GM12878 (cell line): ENCODE measurements at regions of chr5 and their contacts with region 1.

Region 1: DNA sequence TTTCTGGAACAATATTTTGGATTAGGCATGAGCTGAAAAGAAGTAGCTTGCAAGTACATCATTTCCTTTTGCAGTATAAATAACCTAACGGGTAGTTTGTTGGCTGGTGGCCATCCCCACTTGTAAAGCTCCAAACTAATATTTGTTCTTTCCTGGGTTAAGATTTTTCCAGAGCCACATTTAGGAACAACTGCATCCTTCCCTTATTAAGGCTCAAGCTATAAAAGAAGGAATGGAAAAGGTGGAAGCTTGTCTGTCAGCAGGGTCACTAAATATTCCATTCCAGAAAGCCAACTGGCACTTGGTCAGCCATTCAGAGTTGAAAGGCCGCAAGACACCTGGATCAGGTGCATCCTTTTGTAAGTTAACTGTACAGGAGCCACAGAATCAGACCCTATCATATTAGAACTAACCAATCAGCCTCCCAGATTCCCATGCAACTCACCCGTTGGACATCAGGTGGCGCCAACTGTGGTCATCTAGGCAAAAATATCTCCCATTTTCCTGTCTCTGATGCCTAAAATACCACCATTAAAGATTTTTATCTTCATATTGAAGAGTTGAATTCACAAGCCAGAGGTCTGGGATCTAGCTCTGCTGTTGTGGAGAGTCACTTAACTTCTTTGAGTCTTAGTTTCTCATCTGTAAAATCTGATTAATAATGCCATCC is 82.9 kb downstream of the PTCD2 start:
- DNase-seq: no peak
- ATAC-seq: no peak
- H3K4me3 ChIP-seq: no peak overlapping the region
- H3K27ac ChIP-seq: no peak overlapping the region
- H3K4me1 ChIP-seq: no peaks in the 10 kb centered on the region
- H3K27me3 ChIP-seq: no peaks in the 10 kb centered on the region
- CTCF ChIP-seq: peak in 1 of 3 experiments; percentile 18; a peak in 2 of 6 replicates
- EP300 ChIP-seq: no peak
- POLR2A ChIP-seq: no peak
- RAD21 ChIP-seq: 0 out of 2 replicates have a peak, but pooled peaks have one; percentile 1

Region 2: GRCh38 chr5:72214168-72214567 is 188.9 kb before region 1 on chr5:
- CTCF ChIA-PET with region 1: no interaction called
- POLR2A ChIA-PET with region 1: no interaction called
- RAD21 ChIA-PET with region 1: no interaction called
- SMC1A ChIA-PET with region 1: no interaction called
- in situ Hi-C with region 1: no loop called
- intact Hi-C with region 1: no loop called
- DNase-seq: no peak
- ATAC-seq: no peak
- H3K4me3 ChIP-seq: no peak overlapping the region
- H3K27ac ChIP-seq: no peak overlapping the region
- H3K4me1 ChIP-seq: no peaks in the 10 kb centered on the region
- H3K27me3 ChIP-seq: no peaks in the 10 kb centered on the region
- CTCF ChIP-seq: no peak
- EP300 ChIP-seq: no peak
- POLR2A ChIP-seq: no peak
- RAD21 ChIP-seq: no peak

Region 3: GRCh38 chr5:72417333-72418207 is 14.5 kb after region 1 on chr5:
- CTCF ChIA-PET with region 1: interaction called, 5 read pairs
- POLR2A ChIA-PET with region 1: no interaction called
- RAD21 ChIA-PET with region 1: interaction called, 3 read pairs
- SMC1A ChIA-PET with region 1: interaction called, 12 read pairs
- in situ Hi-C with region 1: no loop called
- intact Hi-C with region 1: no loop called
- DNase-seq: no peak
- ATAC-seq: no peak
- H3K4me3 ChIP-seq: no peak overlapping the region
- H3K27ac ChIP-seq: no peak overlapping the region
- H3K4me1 ChIP-seq: no peaks in the 10 kb centered on the region
- H3K27me3 ChIP-seq: no peaks in the 10 kb centered on the region
- CTCF ChIP-seq: no peak
- EP300 ChIP-seq: no peak
- POLR2A ChIP-seq: no peak
- RAD21 ChIP-seq: no peak

Region 4: GRCh38 chr5:72427488-72428437 is 24.7 kb after region 1 on chr5:
- CTCF ChIA-PET with region 1: no interaction called
- POLR2A ChIA-PET with region 1: no interaction called
- RAD21 ChIA-PET with region 1: no interaction called
- SMC1A ChIA-PET with region 1: interaction called, 11 read pairs
- in situ Hi-C with region 1: no loop called
- intact Hi-C with region 1: no loop called
- DNase-seq: no peak
- ATAC-seq: no peak
- H3K4me3 ChIP-seq: no peak overlapping the region
- H3K27ac ChIP-seq: no peak overlapping the region
- H3K4me1 ChIP-seq: no peaks in the 10 kb centered on the region
- H3K27me3 ChIP-seq: no peaks in the 10 kb centered on the region
- CTCF ChIP-seq: no peak
- EP300 ChIP-seq: no peak
- POLR2A ChIP-seq: no peak
- RAD21 ChIP-seq: no peak